B cell (primary cell): ENCODE measurements at regions of chr14 and their contacts with region 1.

Region 1: GRCh38 chr14:50311975-50312733 is at the starts of genes DMAC2L and L2HGDH:
- DNase-seq: peak; percentile 95
- ATAC-seq: peak; percentile 93
- H3K4me3 ChIP-seq: peak within 1 kb of the TSS; percentile 73 to 81 (median 79)
- H3K4me3 Mint-ChIP-seq: peak within 1 kb of the TSS; percentile 97
- H3K27ac ChIP-seq: peak within 1 kb of the TSS; percentile 86
- H3K27ac Mint-ChIP-seq: peak within 1 kb of the TSS; percentile 98
- H3K4me1 ChIP-seq: peaks cover 13 to 16% of the 10 kb centered on the region in 2 donors
- H3K4me1 Mint-ChIP-seq: peaks cover 36% of the 10 kb centered on the region
- H3K27me3 ChIP-seq: no peaks in the 10 kb centered on the region
- H3K27me3 Mint-ChIP-seq: no peaks in the 10 kb centered on the region
- CTCF ChIP-seq: peak; percentile 42
- total RNA-seq, gene DMAC2L: 31.9 and 40.0 TPM in 2 replicates
- total RNA-seq, gene L2HGDH: 5.5 and 5.6 TPM in 2 replicates

Region 2: DNA sequence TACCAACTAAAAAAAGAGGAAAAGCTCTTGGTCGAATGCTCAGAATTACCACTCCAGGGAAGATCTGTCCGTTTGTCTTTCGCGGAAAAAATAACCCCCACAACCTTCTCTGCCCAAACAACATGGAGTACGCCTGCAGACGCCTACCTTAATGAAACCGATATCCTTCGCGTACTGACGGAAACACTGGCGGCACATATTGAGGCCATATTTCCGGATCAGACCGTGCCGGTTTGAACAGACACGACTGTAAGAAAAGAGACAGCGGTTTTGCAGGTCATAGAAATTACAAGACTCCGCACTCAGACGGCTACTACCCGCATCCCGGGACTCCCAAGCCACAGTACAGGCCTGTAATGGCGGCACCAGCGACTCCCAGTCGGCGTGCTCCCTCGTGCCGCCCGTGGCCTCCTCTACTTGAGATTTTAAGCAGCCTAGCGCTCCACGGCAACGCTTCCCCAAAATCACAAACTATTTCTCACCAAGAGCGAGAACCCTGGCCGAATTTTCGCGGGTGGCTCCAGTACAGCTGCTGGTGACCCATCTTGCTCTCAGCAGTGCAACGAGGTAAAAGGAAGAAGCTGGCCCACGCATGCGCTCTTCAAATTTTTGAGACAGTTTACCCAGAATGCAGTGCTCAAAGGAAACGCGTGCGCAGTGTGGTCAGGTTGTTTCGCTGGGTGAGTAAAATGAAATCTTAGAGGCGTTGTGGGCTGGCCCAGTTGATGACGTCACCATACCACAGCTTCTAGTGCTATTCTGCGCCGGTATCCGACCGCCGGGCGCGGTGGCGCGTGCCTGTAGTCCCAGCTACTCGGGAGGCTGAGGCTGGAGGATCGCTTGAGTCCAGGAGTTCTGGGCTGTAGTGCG is 726.1 kb before region 1 on chr14 and contains the start of gene RPS29:
- CTCF ChIA-PET with region 1: no interaction called
- POLR2A ChIA-PET with region 1: no interaction called
- intact Hi-C with region 1: loop called (anchors 2 kb)
- DNase-seq: peak; percentile 100
- ATAC-seq: peak; percentile 86
- H3K4me3 ChIP-seq: peak within 1 kb of the TSS; percentile 70 to 100 (median 88)
- H3K4me3 Mint-ChIP-seq: peak within 1 kb of the TSS; percentile 88
- H3K27ac ChIP-seq: peak within 1 kb of the TSS; percentile 88 to 95
- H3K27ac Mint-ChIP-seq: peak within 1 kb of the TSS; percentile 100
- H3K4me1 ChIP-seq: peaks cover 17 to 24% of the 10 kb centered on the region in 2 donors
- H3K4me1 Mint-ChIP-seq: peaks cover 46% of the 10 kb centered on the region
- H3K27me3 ChIP-seq: no peaks in the 10 kb centered on the region
- H3K27me3 Mint-ChIP-seq: no peaks in the 10 kb centered on the region
- CTCF ChIP-seq: no peak
- total RNA-seq, gene RPS29: 2,497 and 2,873 TPM in 2 replicates

Region 3: DNA sequence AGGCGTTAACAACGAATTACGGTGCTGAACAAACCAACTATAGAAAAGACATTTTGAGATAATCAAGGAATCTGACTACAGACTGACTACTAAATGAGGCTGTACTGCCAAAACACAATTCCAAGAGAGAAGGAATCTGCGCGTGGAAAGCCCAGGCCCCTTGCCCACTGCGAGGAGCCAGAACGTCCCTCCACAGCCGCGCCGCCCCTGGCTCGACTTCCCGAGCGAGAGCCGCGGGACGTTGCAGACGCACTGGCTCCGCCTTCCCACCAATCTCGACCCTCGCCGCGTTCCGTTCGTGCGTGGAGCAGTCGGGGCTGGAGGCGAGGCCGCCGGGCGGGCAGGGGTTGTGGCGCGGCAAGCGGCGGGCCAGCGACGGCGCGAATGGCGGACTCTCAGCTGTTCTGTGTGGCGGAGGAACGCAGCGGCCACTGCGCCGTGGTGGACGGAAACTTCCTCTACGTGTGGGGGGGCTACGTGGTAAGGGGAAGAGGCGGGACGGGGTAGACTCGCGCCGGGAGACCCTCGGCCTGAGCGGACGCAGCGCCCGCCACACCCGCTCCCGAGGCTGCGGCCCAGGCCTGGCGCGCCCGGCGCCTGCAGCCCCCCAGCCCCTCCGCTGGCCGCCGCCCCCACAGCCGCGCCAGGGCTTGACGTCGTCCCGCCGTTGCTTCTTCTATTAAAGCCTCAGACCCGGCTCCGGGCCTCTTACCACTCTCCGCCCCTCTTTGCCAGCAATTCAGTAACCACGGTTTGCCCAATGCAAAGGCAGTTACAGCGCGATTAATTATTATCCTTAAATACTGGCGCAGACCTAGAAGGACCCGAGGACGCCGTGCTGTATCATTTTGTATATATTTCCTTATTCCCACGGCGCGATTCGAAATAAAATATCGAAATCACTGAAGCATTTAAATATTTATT is 619.1 kb before region 1 on chr14 and contains the start of gene KLHDC1:
- CTCF ChIA-PET with region 1: no interaction called
- POLR2A ChIA-PET with region 1: no interaction called
- intact Hi-C with region 1: loop called (anchors 1 kb)
- DNase-seq: peak; percentile 85
- ATAC-seq: peak; percentile 78
- H3K4me3 ChIP-seq: peak within 1 kb of the TSS; percentile 44 to 74 (median 72)
- H3K4me3 Mint-ChIP-seq: peak within 1 kb of the TSS; percentile 92
- H3K27ac ChIP-seq: peak within 1 kb of the TSS; percentile 47 to 83
- H3K27ac Mint-ChIP-seq: peak within 1 kb of the TSS; percentile 87
- H3K4me1 ChIP-seq: peaks cover 9 to 11% of the 10 kb centered on the region in 2 donors
- H3K4me1 Mint-ChIP-seq: peaks cover 23% of the 10 kb centered on the region
- H3K27me3 ChIP-seq: no peaks in the 10 kb centered on the region
- H3K27me3 Mint-ChIP-seq: no peaks in the 10 kb centered on the region
- CTCF ChIP-seq: no peak
- total RNA-seq, gene KLHDC1: 11.7 and 13.7 TPM in 2 replicates

Region 4: DNA sequence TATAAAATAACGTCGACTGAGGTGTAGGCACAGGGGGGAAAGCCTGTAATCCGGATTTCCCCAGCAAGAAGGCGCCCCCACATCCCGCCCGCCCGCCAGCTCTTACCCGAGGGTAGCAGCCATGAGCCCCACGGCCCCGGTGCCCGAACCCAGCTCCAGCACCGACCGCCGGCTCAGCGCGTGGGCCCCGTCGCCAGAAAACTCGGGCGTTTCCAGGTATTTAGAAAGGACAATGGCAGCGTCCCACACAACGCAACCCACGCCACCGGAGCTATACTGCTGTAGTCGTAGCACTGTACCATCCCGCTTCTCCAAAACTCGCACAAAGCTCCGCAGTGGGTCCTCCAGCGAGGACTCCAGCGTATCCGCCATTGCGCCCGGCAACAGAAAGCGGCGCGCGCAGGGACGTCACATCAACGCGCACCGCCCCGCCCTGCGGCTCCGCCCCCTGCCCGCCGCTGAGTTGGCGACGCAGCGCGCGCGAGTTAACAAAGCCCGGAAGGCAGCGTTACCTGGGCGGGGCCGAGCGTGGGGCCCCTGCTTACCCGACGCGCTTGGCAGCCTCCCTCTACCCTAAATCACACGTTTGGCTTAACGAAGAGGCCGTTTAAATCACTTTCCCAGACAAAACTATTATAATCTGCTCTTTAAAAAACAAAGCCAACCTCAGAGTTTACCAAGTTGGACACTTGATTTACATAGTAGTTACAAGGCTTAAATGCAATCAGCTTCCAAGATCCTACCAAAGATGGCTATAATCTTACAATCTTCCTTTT is 195.8 kb before region 1 on chr14 and contains the start of gene VCPKMT:
- CTCF ChIA-PET with region 1: no interaction called
- POLR2A ChIA-PET with region 1: interaction called, 4 read pairs
- intact Hi-C with region 1: loop called (anchors 1 kb)
- DNase-seq: peak; percentile 97
- ATAC-seq: peak; percentile 97
- H3K4me3 ChIP-seq: peak within 1 kb of the TSS; percentile 69 to 92 (median 87)
- H3K4me3 Mint-ChIP-seq: peak within 1 kb of the TSS; percentile 98
- H3K27ac ChIP-seq: peak within 1 kb of the TSS; percentile 92 to 99
- H3K27ac Mint-ChIP-seq: peak within 1 kb of the TSS; percentile 98
- H3K4me1 ChIP-seq: peaks cover 44 to 45% of the 10 kb centered on the region in 2 donors
- H3K4me1 Mint-ChIP-seq: peaks cover 45% of the 10 kb centered on the region
- H3K27me3 ChIP-seq: no peaks in the 10 kb centered on the region
- H3K27me3 Mint-ChIP-seq: no peaks in the 10 kb centered on the region
- CTCF ChIP-seq: no peak
- total RNA-seq, gene VCPKMT: 22.8 and 27.1 TPM in 2 replicates

Region 5: GRCh38 chr14:50363714-50364111 is 51.6 kb after region 1 on chr14:
- CTCF ChIA-PET with region 1: interaction called, 6 read pairs
- POLR2A ChIA-PET with region 1: interaction called, 8 read pairs
- intact Hi-C with region 1: loop called (anchors 2 kb)
- DNase-seq: peak; percentile 87
- ATAC-seq: peak; percentile 98
- H3K4me3 ChIP-seq: peak overlapping the region; percentile 44 to 82 (median 58)
- H3K4me3 Mint-ChIP-seq: peak overlapping the region; percentile 84
- H3K27ac ChIP-seq: peak overlapping the region; percentile 87 to 90
- H3K27ac Mint-ChIP-seq: peak overlapping the region; percentile 88
- H3K4me1 ChIP-seq: peaks cover 21 to 33% of the 10 kb centered on the region in 2 donors
- H3K4me1 Mint-ChIP-seq: peaks cover 46% of the 10 kb centered on the region
- H3K27me3 ChIP-seq: no peaks in the 10 kb centered on the region
- H3K27me3 Mint-ChIP-seq: no peaks in the 10 kb centered on the region
- CTCF ChIP-seq: no peak

Region 6: GRCh38 chr14:50667996-50668825 is 356.1 kb after region 1 on chr14 and contains the start of gene SAV1:
- CTCF ChIA-PET with region 1: no interaction called
- POLR2A ChIA-PET with region 1: no interaction called
- intact Hi-C with region 1: loop called (anchors 5 kb)
- DNase-seq: peak; percentile 80
- ATAC-seq: peak; percentile 63
- H3K4me3 ChIP-seq: peak within 1 kb of the TSS; percentile 47 to 93 (median 70)
- H3K4me3 Mint-ChIP-seq: no peak within 1 kb of the TSS
- H3K27ac ChIP-seq: peak within 1 kb of the TSS; percentile 83 to 91
- H3K27ac Mint-ChIP-seq: no peak within 1 kb of the TSS
- H3K4me1 ChIP-seq: peaks cover 22 to 42% of the 10 kb centered on the region in 2 donors
- H3K4me1 Mint-ChIP-seq: peaks cover 26% of the 10 kb centered on the region
- H3K27me3 ChIP-seq: no peaks in the 10 kb centered on the region
- H3K27me3 Mint-ChIP-seq: no peaks in the 10 kb centered on the region
- CTCF ChIP-seq: no peak
- total RNA-seq, gene SAV1: 36.1 and 39.7 TPM in 2 replicates

Region 7: GRCh38 chr14:51581017-51581881 is 1269.1 kb after region 1 on chr14:
- CTCF ChIA-PET with region 1: no interaction called
- POLR2A ChIA-PET with region 1: no interaction called
- intact Hi-C with region 1: no loop called
- DNase-seq: no peak
- ATAC-seq: no peak
- H3K4me3 ChIP-seq: no peak overlapping the region
- H3K4me3 Mint-ChIP-seq: no peak overlapping the region
- H3K27ac ChIP-seq: no peak overlapping the region
- H3K27ac Mint-ChIP-seq: no peak overlapping the region
- H3K4me1 ChIP-seq: no peaks in the 10 kb centered on the region
- H3K4me1 Mint-ChIP-seq: no peaks in the 10 kb centered on the region
- H3K27me3 ChIP-seq: peaks cover 0 to 4% (median 1%) of the 10 kb centered on the region in 4 experiments
- H3K27me3 Mint-ChIP-seq: peaks cover 30% of the 10 kb centered on the region
- CTCF ChIP-seq: no peak

Region 8: DNA sequence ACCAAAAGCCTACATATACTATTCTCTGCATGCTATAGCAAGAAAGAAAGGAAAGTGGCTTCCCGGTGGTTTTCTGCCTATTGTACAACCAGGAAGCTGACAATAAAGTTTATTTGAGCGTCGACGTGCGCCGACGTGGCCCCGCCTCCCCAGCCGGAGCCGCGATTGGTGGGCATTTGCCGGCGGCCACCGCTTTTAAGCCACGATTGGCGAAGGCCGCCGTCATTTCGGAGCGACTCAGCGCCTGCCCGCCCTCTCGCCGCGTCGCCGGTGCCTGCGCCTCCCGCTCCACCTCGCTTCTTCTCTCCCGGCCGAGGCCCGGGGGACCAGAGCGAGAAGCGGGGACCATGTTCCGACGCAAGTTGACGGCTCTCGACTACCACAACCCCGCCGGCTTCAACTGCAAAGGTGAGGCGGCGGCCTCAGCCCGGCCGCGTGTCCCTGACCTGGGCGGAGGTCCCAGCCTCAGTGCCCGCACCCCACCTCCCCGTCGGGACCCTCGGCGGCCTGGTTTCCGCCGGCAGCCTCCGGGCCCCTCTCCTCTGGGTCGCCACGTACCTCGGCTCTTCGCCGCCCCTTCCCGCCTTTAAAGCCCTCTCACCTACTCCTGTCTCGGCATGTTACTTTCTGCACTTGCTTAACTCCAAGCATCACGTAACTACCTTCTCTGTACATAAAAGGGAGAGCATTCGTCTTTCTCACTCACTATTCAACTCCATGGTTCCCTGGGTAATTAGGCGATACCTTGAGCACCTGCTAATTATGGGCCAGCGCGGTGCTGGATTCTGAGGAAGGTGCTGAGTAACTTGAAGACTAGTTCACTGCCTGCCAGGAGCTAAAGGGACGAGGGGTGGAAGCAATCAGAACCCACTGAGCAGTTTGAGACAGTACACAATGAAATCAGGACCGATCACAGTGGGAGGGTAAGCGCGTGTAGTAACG is 1677.4 kb after region 1 on chr14 and contains the start of gene RTRAF:
- CTCF ChIA-PET with region 1: no interaction called
- POLR2A ChIA-PET with region 1: no interaction called
- intact Hi-C with region 1: loop called (anchors 5 kb)
- DNase-seq: peak; percentile 95
- ATAC-seq: peak; percentile 96
- H3K4me3 ChIP-seq: peak within 1 kb of the TSS; percentile 72 to 94 (median 77)
- H3K4me3 Mint-ChIP-seq: peak within 1 kb of the TSS; percentile 98
- H3K27ac ChIP-seq: peak within 1 kb of the TSS; percentile 67 to 95
- H3K27ac Mint-ChIP-seq: peak within 1 kb of the TSS; percentile 91
- H3K4me1 ChIP-seq: peaks cover 15 to 24% of the 10 kb centered on the region in 2 donors
- H3K4me1 Mint-ChIP-seq: peaks cover 34% of the 10 kb centered on the region
- H3K27me3 ChIP-seq: no peaks in the 10 kb centered on the region
- H3K27me3 Mint-ChIP-seq: no peaks in the 10 kb centered on the region
- CTCF ChIP-seq: no peak
- total RNA-seq, gene RTRAF: 91.1 and 94.2 TPM in 2 replicates